ENCODE measurements at regions of chr1 and their contacts with region 1.

Region 1: GRCh38 chr1:46718727-46719622 is at the start of gene EFCAB14:
- DNase-seq: peak; percentile 98 to 100 (median 100)
- ATAC-seq: peak; percentile 99
- H3K4me3 ChIP-seq: peak within 1 kb of the TSS; percentile 78
- H3K4me3 Mint-ChIP-seq: peak within 1 kb of the TSS; percentile 86 to 96 (median 91)
- H3K27ac ChIP-seq: peak within 1 kb of the TSS; percentile 91
- H3K27ac Mint-ChIP-seq: peak within 1 kb of the TSS; percentile 80 to 96 (median 93)
- H3K4me1 ChIP-seq: peaks cover 20 to 28% of the 10 kb centered on the region in 2 donors
- H3K4me1 Mint-ChIP-seq: peaks cover 38 to 52% (median 43%) of the 10 kb centered on the region in 7 donors
- H3K27me3 ChIP-seq: no peaks in the 10 kb centered on the region
- H3K27me3 Mint-ChIP-seq: no peaks in the 10 kb centered on the region
- total RNA-seq, gene EFCAB14: 64.5 to 98.2 (median 89.5) TPM

Region 2: GRCh38 chr1:46303038-46303871 is 415.7 kb before region 1 on chr1 and contains the starts of genes LRRC41 and UQCRH:
- CTCF ChIA-PET with region 1: no interaction called
- POLR2A ChIA-PET with region 1: no interaction called
- intact Hi-C with region 1: loop called in 1 of 2 experiments (anchors 2 kb)
- DNase-seq: peak; percentile 91 to 96 (median 94)
- ATAC-seq: peak; percentile 94
- H3K4me3 ChIP-seq: peak within 1 kb of the TSS; percentile 83
- H3K4me3 Mint-ChIP-seq: peak within 1 kb of the TSS; percentile 94 to 99 (median 98)
- H3K27ac ChIP-seq: peak within 1 kb of the TSS; percentile 98
- H3K27ac Mint-ChIP-seq: peak within 1 kb of the TSS; percentile 95 to 99 (median 97)
- H3K4me1 ChIP-seq: peaks cover 19 to 37% of the 10 kb centered on the region in 2 donors
- H3K4me1 Mint-ChIP-seq: peaks cover 31 to 65% (median 46%) of the 10 kb centered on the region in 7 donors
- H3K27me3 ChIP-seq: no peaks in the 10 kb centered on the region
- H3K27me3 Mint-ChIP-seq: peaks cover 0 to 2% (median 0%) of the 10 kb centered on the region in 5 donors
- total RNA-seq, gene LRRC41: 34.4 to 50.5 (median 37.2) TPM
- total RNA-seq, gene UQCRH: 107 to 260 (median 127) TPM

Region 3: DNA sequence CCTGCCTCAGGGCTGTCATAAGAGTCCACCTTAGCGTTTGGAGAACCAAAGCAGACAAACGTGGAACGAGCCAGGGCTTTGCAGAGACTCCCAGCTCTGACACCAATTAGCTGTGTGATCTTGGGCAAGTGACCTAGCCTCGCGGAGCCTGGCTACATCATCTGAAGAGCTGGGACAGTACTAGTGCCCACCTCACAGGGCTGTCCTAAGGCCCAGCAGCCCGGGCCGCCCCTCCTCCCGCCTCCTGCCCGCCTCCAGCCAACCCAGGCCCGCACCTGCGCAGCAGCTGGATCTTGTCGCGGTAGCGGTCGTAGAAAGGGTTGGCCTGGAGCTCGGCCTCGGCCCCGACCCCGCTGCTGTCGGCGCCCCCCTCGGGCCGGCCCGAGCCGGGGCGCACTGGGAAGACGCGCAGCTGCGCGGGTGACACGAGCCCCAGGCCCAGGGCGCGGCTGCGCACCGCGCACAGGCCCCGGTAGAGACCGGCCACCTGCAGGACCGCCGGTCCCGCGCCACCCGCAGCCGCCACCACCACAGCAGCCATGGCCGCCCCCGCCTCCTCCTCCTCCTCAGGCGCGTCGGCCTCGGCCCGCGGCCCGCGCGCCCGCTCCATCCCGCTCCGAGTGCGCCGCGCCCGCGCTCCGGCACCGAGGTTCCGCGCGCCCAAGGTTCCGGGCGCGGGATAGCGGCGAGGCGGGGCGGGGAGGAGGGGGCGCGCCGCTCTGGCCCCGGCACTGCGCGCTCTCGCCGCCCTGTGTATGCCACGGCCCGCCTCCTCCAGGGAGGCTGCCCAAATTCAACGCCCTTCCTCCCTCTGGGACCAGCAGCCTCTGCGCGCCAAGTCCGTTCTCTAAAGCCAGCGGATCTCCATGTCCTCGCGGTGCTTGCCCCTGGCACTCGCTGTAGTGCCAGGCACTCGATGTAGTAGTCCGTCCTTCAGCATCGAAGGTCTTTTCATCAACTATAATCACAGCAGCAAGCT is 50.9 kb before region 1 on chr1 and contains the start of gene ATPAF1:
- CTCF ChIA-PET with region 1: no interaction called
- POLR2A ChIA-PET with region 1: interaction called, 12 read pairs
- intact Hi-C with region 1: loop called (anchors 1 kb)
- DNase-seq: peak; percentile 41 to 76 (median 69)
- ATAC-seq: peak; percentile 92
- H3K4me3 ChIP-seq: peak within 1 kb of the TSS; percentile 62
- H3K4me3 Mint-ChIP-seq: peak within 1 kb of the TSS in 8 of 10 donors; percentile 77 to 89 (median 87)
- H3K27ac ChIP-seq: peak within 1 kb of the TSS; percentile 74
- H3K27ac Mint-ChIP-seq: peak within 1 kb of the TSS; percentile 16 to 89 (median 68)
- H3K4me1 ChIP-seq: peaks cover 12 to 21% of the 10 kb centered on the region in 2 donors
- H3K4me1 Mint-ChIP-seq: peaks cover 16 to 30% (median 25%) of the 10 kb centered on the region in 7 donors
- H3K27me3 ChIP-seq: no peaks in the 10 kb centered on the region
- H3K27me3 Mint-ChIP-seq: no peaks in the 10 kb centered on the region
- total RNA-seq, gene ATPAF1: 17.3 to 49.5 (median 28.6) TPM

Region 4: DNA sequence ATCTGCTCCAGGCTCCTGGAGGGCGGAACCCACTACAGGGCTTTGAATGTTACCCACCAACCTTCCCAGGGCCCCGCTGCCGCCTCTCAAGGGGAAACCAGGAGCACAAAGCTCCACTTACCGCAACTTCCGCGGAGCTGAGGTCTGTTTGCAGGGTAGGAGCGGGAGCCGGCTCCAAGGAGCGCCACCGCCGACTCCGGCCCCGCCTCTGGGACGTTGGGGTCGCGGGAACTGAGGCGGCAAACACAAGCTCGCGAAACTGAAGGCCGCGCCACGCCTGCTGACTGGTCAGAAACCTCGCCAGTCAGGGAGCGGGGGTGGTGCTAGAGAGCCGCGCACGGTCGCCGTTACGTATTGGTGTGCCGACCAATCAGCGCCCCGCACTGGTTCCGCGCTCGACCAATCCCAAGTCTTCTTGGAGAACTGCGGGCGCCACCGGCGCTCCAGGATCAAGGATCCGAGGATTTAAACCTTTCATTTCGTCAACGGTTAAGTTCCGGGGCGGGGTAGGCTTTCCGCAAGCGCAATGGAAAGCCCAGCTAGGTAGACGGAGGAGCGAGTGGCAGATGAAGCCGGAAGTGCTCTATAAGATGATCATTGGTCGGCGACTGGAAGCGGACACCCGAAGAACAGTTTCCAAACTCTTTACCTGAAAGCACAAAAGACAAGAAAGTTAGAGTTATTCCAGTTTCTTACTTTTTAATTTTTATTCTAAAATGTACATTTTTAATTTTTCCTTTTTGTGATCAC is 595.1 kb after region 1 on chr1 and contains the start of gene STIL:
- CTCF ChIA-PET with region 1: no interaction called
- POLR2A ChIA-PET with region 1: no interaction called
- intact Hi-C with region 1: loop called in 1 of 2 experiments (anchors 1 kb)
- DNase-seq: peak; percentile 87 to 96 (median 95)
- ATAC-seq: peak; percentile 98
- H3K4me3 ChIP-seq: peak within 1 kb of the TSS; percentile 73
- H3K4me3 Mint-ChIP-seq: peak within 1 kb of the TSS; percentile 84 to 98 (median 93)
- H3K27ac ChIP-seq: peak within 1 kb of the TSS; percentile 78
- H3K27ac Mint-ChIP-seq: peak within 1 kb of the TSS; percentile 88 to 98 (median 95)
- H3K4me1 ChIP-seq: no peaks in the 10 kb centered on the region
- H3K4me1 Mint-ChIP-seq: peaks cover 4 to 26% (median 13%) of the 10 kb centered on the region in 7 donors
- H3K27me3 ChIP-seq: no peaks in the 10 kb centered on the region
- H3K27me3 Mint-ChIP-seq: peaks cover 0 to 3% (median 0%) of the 10 kb centered on the region in 5 donors
- total RNA-seq, gene STIL: 1.3 to 28.5 (median 1.9) TPM

Region 5: GRCh38 chr1:48471691-48472576 is 1753.0 kb after region 1 on chr1 and contains the start of gene SPATA6:
- CTCF ChIA-PET with region 1: no interaction called
- POLR2A ChIA-PET with region 1: no interaction called
- intact Hi-C with region 1: loop called in 1 of 2 experiments (anchors 5 kb)
- DNase-seq: peak; percentile 86 to 95 (median 91)
- ATAC-seq: peak; percentile 97
- H3K4me3 ChIP-seq: peak within 1 kb of the TSS; percentile 82
- H3K4me3 Mint-ChIP-seq: peak within 1 kb of the TSS; percentile 83 to 96 (median 92)
- H3K27ac ChIP-seq: peak within 1 kb of the TSS; percentile 75
- H3K27ac Mint-ChIP-seq: peak within 1 kb of the TSS; percentile 61 to 92 (median 88)
- H3K4me1 ChIP-seq: peaks cover 6 to 23% of the 10 kb centered on the region in 2 donors
- H3K4me1 Mint-ChIP-seq: peaks cover 22 to 42% (median 32%) of the 10 kb centered on the region in 7 donors
- H3K27me3 ChIP-seq: no peaks in the 10 kb centered on the region
- H3K27me3 Mint-ChIP-seq: peaks cover 0 to 27% (median 0%) of the 10 kb centered on the region in 5 donors
- total RNA-seq, gene SPATA6: 1.0 to 11.2 (median 5.4) TPM

Measured in naive thymus-derived CD4-positive, alpha-beta T cell (primary cell).